ENCODE measurements at regions of chr16 and their contacts with region 1.

Region 1: GRCh38 chr16:89374393-89374960 is 115.9 kb downstream of the ANKRD11 start:
- DNase-seq: no peak
- H3K4me3 ChIP-seq: no peak overlapping the region
- H3K27ac ChIP-seq: no peak overlapping the region
- H3K4me1 ChIP-seq: peaks cover 4% of the 10 kb centered on the region
- H3K27me3 ChIP-seq: no peaks in the 10 kb centered on the region
- CTCF ChIP-seq: no peak
- POLR2A ChIP-seq: no peak

Region 2: GRCh38 chr16:89167425-89167941 is 207.0 kb before region 1 on chr16:
- CTCF ChIA-PET with region 1: no interaction called
- POLR2A ChIA-PET with region 1: no interaction called
- dilution Hi-C with region 1: no loop called
- intact Hi-C with region 1: no loop called
- DNase-seq: peak; percentile 51
- H3K4me3 ChIP-seq: no peak overlapping the region
- H3K27ac ChIP-seq: no peak overlapping the region
- H3K4me1 ChIP-seq: peaks cover 3% of the 10 kb centered on the region
- H3K27me3 ChIP-seq: no peaks in the 10 kb centered on the region
- CTCF ChIP-seq: peak; percentile 80 to 96
- POLR2A ChIP-seq: no peak

Region 3: DNA sequence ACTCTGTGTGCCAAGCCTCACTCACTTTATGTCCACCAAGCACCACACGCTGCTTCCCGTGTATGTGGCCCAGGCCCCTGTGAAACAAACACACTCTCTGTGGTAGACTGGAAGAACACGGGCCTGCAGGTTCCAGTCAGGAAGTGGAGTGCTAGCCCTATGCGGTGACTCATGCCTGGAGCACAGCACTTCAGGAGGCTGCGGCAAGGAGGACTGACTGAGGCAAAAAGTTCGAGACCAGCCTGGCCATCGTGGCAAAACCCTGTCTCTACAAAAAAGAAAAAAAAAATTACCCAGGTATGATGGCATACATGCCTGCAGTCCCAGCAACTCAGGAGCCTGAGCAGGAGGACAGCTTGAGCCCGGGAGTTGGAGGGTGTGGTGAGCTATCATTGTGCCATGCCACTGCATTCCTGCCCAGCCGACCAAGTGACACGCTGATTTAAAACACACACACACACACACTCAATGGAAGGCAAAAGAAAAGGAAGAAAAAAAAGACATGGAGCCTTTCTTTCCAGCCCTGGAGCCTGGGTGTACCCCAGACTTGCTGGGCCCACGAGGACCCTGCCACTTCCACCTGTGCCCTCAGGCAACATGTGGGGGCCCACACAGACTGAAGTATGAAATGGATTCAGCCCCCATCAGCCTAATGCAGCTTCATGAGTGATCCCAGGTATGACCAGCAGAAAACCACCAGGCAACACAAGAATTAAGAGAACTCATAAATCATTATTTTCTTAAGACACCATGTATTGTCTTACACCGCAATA is 10.7 kb before region 1 on chr16:
- CTCF ChIA-PET with region 1: interaction called, 10 read pairs
- POLR2A ChIA-PET with region 1: no interaction called
- dilution Hi-C with region 1: no loop called
- intact Hi-C with region 1: no loop called
- DNase-seq: peak; percentile 87
- H3K4me3 ChIP-seq: no peak overlapping the region
- H3K27ac ChIP-seq: peak overlapping the region; percentile 16
- H3K4me1 ChIP-seq: peaks cover 61% of the 10 kb centered on the region
- H3K27me3 ChIP-seq: no peaks in the 10 kb centered on the region
- CTCF ChIP-seq: no peak
- POLR2A ChIP-seq: no peak

Measured in endothelial cell of umbilical vein (primary cell).